ENCODE measurements at regions of chr17 and their contacts with region 1.

Region 1: GRCh38 chr17:40417609-40418427 is at the start of gene TOP2A:
- DNase-seq: peak; percentile 97
- H3K4me3 Mint-ChIP-seq: peak within 1 kb of the TSS; percentile 96
- H3K27ac Mint-ChIP-seq: peak within 1 kb of the TSS; percentile 92
- H3K4me1 Mint-ChIP-seq: peaks cover 35% of the 10 kb centered on the region
- H3K27me3 Mint-ChIP-seq: peaks cover 2% of the 10 kb centered on the region
- total RNA-seq, gene TOP2A: 161 and 174 TPM in 2 replicates

Region 2: DNA sequence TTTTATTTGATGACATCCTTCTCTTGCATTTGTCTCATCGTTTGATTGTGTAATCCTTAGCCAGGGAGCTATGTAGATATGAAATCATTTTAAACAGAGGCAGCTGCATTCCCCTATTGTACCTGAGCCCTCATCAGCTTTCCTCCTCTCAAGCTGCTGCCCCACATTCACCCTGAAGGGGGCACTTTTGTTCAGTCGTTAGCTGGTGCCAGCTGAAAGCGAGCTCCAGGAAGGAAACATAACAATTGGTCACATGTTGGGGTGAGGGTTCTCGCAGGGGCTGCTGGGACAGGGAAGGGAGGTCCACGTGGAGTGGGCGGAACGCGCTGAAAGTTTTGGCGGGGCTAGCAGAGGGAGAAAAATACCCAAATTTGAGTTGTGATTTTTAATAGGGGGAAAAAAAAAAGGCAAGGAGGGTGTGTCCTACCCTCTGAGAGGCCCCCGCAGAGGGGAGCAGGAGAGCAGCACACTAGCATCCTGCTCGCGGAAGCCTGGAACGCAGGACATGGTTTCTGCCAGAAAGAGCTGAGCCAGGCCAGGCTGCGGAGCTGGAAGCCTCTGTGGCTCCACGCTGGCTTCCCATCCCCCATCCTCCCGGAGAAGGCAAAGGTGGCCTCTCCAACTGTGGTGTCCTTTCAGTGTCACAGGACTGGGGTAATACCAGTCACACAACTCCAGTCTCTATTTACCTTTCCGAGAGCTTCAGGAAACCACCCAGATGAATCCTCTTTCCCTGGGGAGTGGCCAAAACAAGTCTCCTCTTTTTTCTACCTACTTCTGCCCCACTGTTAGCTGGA is 304.5 kb before region 1 on chr17:
- intact Hi-C with region 1: no loop called
- DNase-seq: peak; percentile 89
- H3K4me3 Mint-ChIP-seq: peak overlapping the region; percentile 82
- H3K27ac Mint-ChIP-seq: peak overlapping the region; percentile 94
- H3K4me1 Mint-ChIP-seq: peaks cover 43% of the 10 kb centered on the region
- H3K27me3 Mint-ChIP-seq: peaks cover under 1% of the 10 kb centered on the region

Region 3: GRCh38 chr17:40177275-40177874 is 240.4 kb before region 1 on chr17 and contains the start of gene RAPGEFL1:
- intact Hi-C with region 1: no loop called
- DNase-seq: peak; percentile 69
- H3K4me3 Mint-ChIP-seq: peak within 1 kb of the TSS; percentile 51
- H3K27ac Mint-ChIP-seq: peak within 1 kb of the TSS; percentile 70
- H3K4me1 Mint-ChIP-seq: peaks cover 8% of the 10 kb centered on the region
- H3K27me3 Mint-ChIP-seq: no peaks in the 10 kb centered on the region
- total RNA-seq, gene RAPGEFL1: 11.8 and 13.0 TPM in 2 replicates

Region 4: DNA sequence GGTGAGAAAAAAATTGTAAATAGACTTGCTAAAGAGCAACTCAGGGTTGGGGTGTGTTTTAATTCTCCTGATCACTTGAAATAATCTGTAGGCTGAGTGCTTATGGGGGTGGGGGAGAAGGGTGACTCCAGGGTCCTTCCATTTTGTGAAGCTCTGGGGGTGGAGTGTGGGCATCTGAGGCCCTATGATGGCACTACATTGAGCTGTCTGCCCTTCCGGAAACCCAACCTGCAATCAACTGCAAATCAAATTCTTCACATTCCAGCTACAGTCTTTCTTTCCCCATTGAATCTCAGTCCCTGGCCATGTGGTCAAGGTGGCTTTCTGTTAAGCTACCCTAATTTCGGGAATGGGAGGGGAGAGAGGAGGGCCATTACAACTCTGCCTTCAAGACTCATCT is 136.2 kb before region 1 on chr17:
- intact Hi-C with region 1: no loop called
- DNase-seq: no peak
- H3K4me3 Mint-ChIP-seq: no peak overlapping the region
- H3K27ac Mint-ChIP-seq: peak overlapping the region; percentile 7
- H3K4me1 Mint-ChIP-seq: peaks cover 35% of the 10 kb centered on the region
- H3K27me3 Mint-ChIP-seq: no peaks in the 10 kb centered on the region

Region 5: GRCh38 chr17:40399185-40399584 is 18.6 kb before region 1 on chr17:
- intact Hi-C with region 1: loop called (anchors 1 kb)
- DNase-seq: no peak
- H3K4me3 Mint-ChIP-seq: no peak overlapping the region
- H3K27ac Mint-ChIP-seq: no peak overlapping the region
- H3K4me1 Mint-ChIP-seq: peaks cover 42% of the 10 kb centered on the region
- H3K27me3 Mint-ChIP-seq: no peaks in the 10 kb centered on the region

Region 6: GRCh38 chr17:40433551-40434415 is 16.0 kb after region 1 on chr17:
- intact Hi-C with region 1: loop called (anchors 2 kb)
- DNase-seq: no peak
- H3K4me3 Mint-ChIP-seq: no peak overlapping the region
- H3K27ac Mint-ChIP-seq: no peak overlapping the region
- H3K4me1 Mint-ChIP-seq: peaks cover 19% of the 10 kb centered on the region
- H3K27me3 Mint-ChIP-seq: peaks cover 33% of the 10 kb centered on the region